ENCODE measurements at regions of chr19 and their contacts with region 1.

Region 1: GRCh38 chr19:10717356-10718204 is at the start of gene DNM2:
- DNase-seq: peak; percentile 98
- H3K4me3 Mint-ChIP-seq: peak within 1 kb of the TSS; percentile 98
- H3K27ac Mint-ChIP-seq: peak within 1 kb of the TSS; percentile 93
- H3K4me1 Mint-ChIP-seq: peaks cover 43% of the 10 kb centered on the region
- H3K27me3 Mint-ChIP-seq: no peaks in the 10 kb centered on the region

Region 2: GRCh38 chr19:10686661-10687517 is 30.7 kb before region 1 on chr19:
- CTCF ChIA-PET with region 1: no interaction called
- DNase-seq: no peak
- H3K4me3 Mint-ChIP-seq: no peak overlapping the region
- H3K27ac Mint-ChIP-seq: no peak overlapping the region
- H3K4me1 Mint-ChIP-seq: no peaks in the 10 kb centered on the region
- H3K27me3 Mint-ChIP-seq: peaks cover 3% of the 10 kb centered on the region

Region 3: GRCh38 chr19:10760273-10760944 is 42.8 kb after region 1 on chr19:
- CTCF ChIA-PET with region 1: interaction called, 28 read pairs
- DNase-seq: peak; percentile 48
- H3K4me3 Mint-ChIP-seq: peak overlapping the region; percentile 52
- H3K27ac Mint-ChIP-seq: peak overlapping the region; percentile 89
- H3K4me1 Mint-ChIP-seq: peaks cover 91% of the 10 kb centered on the region
- H3K27me3 Mint-ChIP-seq: no peaks in the 10 kb centered on the region

Region 4: DNA sequence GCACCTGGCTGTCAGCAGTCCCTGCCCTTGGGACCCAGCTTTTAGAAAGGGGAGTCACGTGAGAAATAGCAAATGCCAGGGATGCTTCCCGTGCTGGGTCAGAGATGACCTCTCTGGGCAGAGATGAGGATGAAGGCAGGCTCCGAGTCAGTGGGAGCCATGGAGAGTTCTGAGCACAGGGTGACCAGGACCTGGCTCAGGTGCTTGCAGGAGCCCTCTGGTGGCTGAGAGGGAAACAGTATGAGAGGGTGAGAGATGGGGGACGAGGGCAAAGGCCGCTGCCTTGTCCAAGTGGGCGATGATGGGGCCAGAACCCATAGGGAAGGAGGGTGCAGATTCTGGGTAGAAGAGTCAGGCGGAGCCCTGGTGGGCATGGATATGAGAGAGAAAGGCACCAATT is 102.6 kb after region 1 on chr19:
- CTCF ChIA-PET with region 1: interaction called, 18 read pairs
- DNase-seq: no peak
- H3K4me3 Mint-ChIP-seq: no peak overlapping the region
- H3K27ac Mint-ChIP-seq: peak overlapping the region; percentile 71
- H3K4me1 Mint-ChIP-seq: peaks cover 8% of the 10 kb centered on the region
- H3K27me3 Mint-ChIP-seq: no peaks in the 10 kb centered on the region

Region 5: DNA sequence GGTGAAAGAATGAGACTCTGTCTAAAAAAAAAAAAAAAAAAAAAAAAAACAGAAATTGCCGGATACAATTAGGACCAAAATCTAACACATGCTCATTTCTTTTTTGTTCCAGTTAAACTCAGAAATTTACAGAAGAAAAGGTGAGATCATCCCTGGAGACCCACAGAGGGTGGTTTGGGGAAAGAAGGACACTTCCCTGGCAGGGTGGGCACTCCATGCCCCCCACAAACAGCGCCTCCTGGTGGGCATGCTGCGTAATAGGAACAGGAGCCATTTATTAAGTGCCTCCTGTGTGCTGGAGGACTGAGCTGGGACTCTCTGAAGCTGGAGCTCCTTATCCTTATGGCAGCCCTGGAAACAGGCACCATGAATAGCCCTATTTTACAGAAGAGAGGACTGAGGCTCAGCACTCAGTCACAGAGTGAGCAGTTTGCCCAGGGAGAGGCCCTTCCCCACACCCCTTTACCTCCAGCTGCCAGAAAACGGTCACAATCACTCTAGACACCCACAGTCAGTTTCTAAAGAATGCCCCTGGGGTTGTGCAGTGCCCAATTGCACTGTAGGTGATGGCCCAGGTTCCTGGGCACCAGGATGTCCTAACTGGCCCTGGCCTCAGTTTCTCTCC is 140.7 kb after region 1 on chr19:
- CTCF ChIA-PET with region 1: interaction called, 142 read pairs
- DNase-seq: peak; percentile 47
- H3K4me3 Mint-ChIP-seq: no peak overlapping the region
- H3K27ac Mint-ChIP-seq: no peak overlapping the region
- H3K4me1 Mint-ChIP-seq: peaks cover 9% of the 10 kb centered on the region
- H3K27me3 Mint-ChIP-seq: no peaks in the 10 kb centered on the region

Region 6: GRCh38 chr19:10870955-10871603 is 153.5 kb after region 1 on chr19 and contains the start of gene CARM1:
- CTCF ChIA-PET with region 1: interaction called, 142 read pairs
- DNase-seq: peak; percentile 99
- H3K4me3 Mint-ChIP-seq: peak within 1 kb of the TSS; percentile 79
- H3K27ac Mint-ChIP-seq: peak within 1 kb of the TSS; percentile 92
- H3K4me1 Mint-ChIP-seq: peaks cover 34% of the 10 kb centered on the region
- H3K27me3 Mint-ChIP-seq: no peaks in the 10 kb centered on the region